A549 (cell line): ENCODE measurements at regions of chr9 and their contacts with region 1.

Region 1: DNA sequence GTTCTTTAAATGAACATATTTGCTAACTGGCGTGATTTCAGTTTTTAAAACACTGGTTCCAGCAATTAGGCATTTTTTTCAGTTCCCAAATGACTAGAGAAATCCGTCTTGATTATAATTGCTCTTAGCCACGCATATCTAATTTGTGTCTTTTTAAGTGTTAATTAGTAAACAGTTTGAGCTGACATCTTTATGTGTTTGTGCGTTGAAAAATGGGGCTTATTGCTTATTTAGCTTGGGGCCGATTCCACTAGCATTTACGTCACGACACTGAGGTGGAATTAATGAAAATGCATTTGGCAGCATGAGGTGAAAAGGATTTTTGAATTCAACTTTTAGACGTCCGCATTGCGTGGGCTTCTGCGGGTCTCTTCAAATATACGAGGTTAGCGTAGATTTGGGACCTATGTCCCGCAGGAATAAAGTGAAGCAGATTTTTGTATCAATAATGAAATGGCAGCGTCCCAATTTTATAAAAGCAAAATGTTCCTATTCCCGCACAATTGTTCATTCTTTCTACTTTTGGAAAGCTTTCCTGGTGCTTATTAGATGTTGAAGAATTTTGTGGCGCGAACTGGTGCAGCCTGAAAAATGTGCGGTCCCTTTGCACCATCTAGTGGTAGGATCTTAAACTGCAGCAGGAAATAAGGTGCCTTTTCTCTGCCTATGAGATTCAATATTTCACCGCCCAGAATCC is 122.7 kb upstream of the LMX1B start:
- DNase-seq: peak in 1 of 2 experiments; percentile 61
- ATAC-seq: peak; percentile 49 to 83; a peak in 5 of 6 replicates
- H3K4me3 ChIP-seq: no peak overlapping the region
- H3K27ac ChIP-seq: no peak overlapping the region
- H3K4me1 ChIP-seq: no peaks in the 10 kb centered on the region
- CTCF ChIP-seq: peak; percentile 90
- EP300 ChIP-seq: no peak
- POLR2A ChIP-seq: no peak
- RAD21 ChIP-seq: peak; percentile 92 to 94

Region 2: GRCh38 chr9:126228781-126229444 is 262.1 kb before region 1 on chr9:
- CTCF ChIA-PET with region 1: interaction called, 10 read pairs
- POLR2A ChIA-PET with region 1: no interaction called
- DNase-seq: peak; percentile 73 to 76
- ATAC-seq: peak; percentile 86 to 97
- H3K4me3 ChIP-seq: no peak overlapping the region
- H3K27ac ChIP-seq: no peak overlapping the region
- H3K4me1 ChIP-seq: no peaks in the 10 kb centered on the region
- CTCF ChIP-seq: peak; percentile 78
- EP300 ChIP-seq: no peak
- POLR2A ChIP-seq: no peak
- RAD21 ChIP-seq: peak; percentile 80 to 84

Region 3: DNA sequence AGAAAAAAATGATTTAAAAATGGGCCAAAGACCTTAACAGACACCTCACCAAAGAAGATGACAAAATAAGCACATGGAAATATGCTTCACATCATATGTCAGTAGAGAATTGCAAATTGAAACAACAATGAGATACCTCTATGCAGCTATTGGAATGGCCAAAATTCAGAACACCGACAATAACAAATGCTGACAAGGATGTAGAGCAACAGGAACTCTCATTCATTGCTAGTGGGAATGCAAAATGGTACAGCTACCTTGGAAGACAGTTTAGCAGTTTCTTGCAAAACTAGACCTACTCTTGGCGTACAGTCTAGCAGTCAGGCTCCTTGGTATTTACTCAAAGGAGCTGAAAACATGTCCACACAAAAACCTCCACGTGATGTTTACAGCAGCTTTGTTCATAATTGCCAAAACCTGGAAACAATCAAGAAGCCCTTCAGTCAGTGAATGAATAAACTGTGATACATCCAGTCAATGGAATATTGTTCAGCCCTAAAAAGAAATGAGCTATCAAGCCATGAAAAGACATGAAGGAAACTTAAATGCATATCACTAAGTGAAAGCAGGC is 174.8 kb before region 1 on chr9:
- CTCF ChIA-PET with region 1: interaction called, 18 read pairs
- POLR2A ChIA-PET with region 1: no interaction called
- DNase-seq: no peak
- ATAC-seq: no peak
- H3K4me3 ChIP-seq: no peak overlapping the region
- H3K27ac ChIP-seq: no peak overlapping the region
- H3K4me1 ChIP-seq: no peaks in the 10 kb centered on the region
- CTCF ChIP-seq: no peak
- EP300 ChIP-seq: no peak
- POLR2A ChIP-seq: no peak
- RAD21 ChIP-seq: no peak

Region 4: GRCh38 chr9:126435105-126435504 is 55.9 kb before region 1 on chr9:
- CTCF ChIA-PET with region 1: interaction called, 10 read pairs
- POLR2A ChIA-PET with region 1: no interaction called
- DNase-seq: no peak
- ATAC-seq: no peak
- H3K4me3 ChIP-seq: no peak overlapping the region
- H3K27ac ChIP-seq: no peak overlapping the region
- H3K4me1 ChIP-seq: no peaks in the 10 kb centered on the region
- CTCF ChIP-seq: no peak
- EP300 ChIP-seq: no peak
- POLR2A ChIP-seq: no peak
- RAD21 ChIP-seq: no peak

Region 5: DNA sequence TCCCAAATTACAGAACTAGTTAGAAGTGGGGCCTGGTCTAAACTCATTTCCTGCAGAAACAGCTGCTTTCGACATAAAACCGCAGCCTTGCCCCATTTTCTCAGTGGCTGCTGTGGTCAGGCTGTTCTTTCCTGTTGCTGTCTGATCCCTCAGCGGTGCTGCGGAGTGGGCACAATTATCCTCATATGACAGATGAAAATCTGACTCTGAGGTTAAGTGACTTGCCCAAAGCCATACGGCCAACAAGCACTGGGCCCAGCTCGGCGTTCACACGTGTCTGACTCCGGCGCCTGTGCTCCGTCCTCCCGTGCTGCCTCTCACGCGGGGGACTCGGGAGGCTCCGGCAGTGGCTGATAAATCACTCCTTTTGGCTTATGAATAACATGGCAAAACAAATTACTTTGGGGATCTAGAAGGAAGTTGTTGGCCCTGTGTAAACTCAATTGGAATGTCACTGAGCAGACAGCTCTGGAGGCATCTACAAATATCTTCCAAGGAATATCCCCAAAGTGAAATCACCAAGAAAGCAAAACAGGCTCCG is 19.9 kb before region 1 on chr9:
- CTCF ChIA-PET with region 1: interaction called, 16 read pairs
- POLR2A ChIA-PET with region 1: no interaction called
- DNase-seq: no peak
- ATAC-seq: no peak
- H3K4me3 ChIP-seq: no peak overlapping the region
- H3K27ac ChIP-seq: no peak overlapping the region
- H3K4me1 ChIP-seq: peaks cover 21% of the 10 kb centered on the region
- CTCF ChIP-seq: no peak
- EP300 ChIP-seq: no peak
- POLR2A ChIP-seq: no peak
- RAD21 ChIP-seq: no peak

Region 6: DNA sequence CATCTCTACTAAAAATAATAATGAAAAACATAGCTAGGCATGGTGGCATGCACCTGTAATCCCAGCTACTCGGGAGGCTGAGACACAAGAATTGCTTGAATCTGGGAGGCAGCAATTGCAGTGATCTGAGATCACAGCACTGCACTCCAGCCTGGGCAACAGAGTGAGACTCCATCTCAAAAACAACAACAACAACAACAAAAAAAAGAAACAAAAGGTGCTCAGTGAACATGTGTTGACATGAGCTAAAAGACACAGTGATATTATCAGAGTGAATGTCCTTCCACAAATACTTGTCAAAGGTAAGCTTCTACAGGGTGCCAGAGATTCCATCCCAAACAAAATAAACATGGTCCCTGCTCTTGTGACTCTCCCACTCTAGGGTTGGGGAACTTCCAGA is 47.5 kb after region 1 on chr9:
- CTCF ChIA-PET with region 1: no interaction called
- POLR2A ChIA-PET with region 1: no interaction called
- DNase-seq: no peak
- ATAC-seq: no peak
- H3K4me3 ChIP-seq: no peak overlapping the region
- H3K27ac ChIP-seq: no peak overlapping the region
- H3K4me1 ChIP-seq: no peaks in the 10 kb centered on the region
- CTCF ChIP-seq: no peak
- EP300 ChIP-seq: no peak
- POLR2A ChIP-seq: no peak
- RAD21 ChIP-seq: no peak

Region 7: DNA sequence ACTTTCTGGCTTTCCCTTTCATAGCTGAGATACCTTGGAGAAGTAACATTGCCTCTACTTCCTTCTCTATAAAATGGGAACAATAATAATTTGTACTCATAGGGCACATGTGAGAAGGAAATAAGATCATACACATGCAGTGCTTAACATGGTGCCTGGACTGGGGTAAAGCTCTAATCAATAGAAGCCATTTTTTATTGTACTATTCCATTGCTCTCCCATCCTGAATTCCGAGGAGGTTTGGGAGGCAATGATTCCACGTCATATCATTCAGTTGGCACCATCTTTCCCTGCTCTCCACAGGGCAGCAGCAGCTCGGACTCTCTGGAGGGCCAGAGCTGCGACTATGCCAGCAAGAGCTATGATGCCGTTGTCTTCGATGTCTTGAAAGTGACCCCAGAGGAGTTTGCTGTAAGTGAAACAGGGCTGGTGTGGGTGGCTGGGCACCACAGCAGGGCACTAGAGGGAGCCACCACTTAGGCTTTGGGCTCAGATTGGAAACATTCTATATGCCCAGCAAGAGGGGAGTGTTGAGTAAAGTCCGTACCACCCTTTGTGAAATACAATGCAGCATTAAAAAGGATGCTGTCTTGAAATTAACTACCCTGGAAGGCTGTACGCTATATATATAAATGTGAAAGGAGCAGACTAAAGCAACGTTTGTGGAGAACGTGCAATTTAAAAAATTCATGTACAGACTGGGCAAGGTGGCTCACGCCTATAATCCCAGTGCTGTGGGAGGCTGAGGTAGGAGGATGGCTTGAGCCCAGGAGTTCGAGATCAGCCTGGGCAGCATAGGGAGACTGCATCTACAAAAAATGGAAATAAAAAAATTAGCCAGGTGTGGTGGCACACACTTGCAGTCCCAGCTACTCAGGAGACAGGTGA is 474.8 kb after region 1 on chr9:
- CTCF ChIA-PET with region 1: no interaction called
- POLR2A ChIA-PET with region 1: no interaction called
- DNase-seq: peak; percentile 67 to 80
- ATAC-seq: peak; percentile 99 to 100
- H3K4me3 ChIP-seq: no peak overlapping the region
- H3K27ac ChIP-seq: no peak overlapping the region
- H3K4me1 ChIP-seq: peaks cover 4% of the 10 kb centered on the region; the same call in 1 of the 3 replicates
- CTCF ChIP-seq: peak; percentile 87
- EP300 ChIP-seq: no peak
- POLR2A ChIP-seq: no peak
- RAD21 ChIP-seq: peak; percentile 91 to 92